Dorsolateral prefrontal cortex (tissue), 120 donors: ENCODE measurements at regions of chr20 and their contacts with region 1.

Region 1: DNA sequence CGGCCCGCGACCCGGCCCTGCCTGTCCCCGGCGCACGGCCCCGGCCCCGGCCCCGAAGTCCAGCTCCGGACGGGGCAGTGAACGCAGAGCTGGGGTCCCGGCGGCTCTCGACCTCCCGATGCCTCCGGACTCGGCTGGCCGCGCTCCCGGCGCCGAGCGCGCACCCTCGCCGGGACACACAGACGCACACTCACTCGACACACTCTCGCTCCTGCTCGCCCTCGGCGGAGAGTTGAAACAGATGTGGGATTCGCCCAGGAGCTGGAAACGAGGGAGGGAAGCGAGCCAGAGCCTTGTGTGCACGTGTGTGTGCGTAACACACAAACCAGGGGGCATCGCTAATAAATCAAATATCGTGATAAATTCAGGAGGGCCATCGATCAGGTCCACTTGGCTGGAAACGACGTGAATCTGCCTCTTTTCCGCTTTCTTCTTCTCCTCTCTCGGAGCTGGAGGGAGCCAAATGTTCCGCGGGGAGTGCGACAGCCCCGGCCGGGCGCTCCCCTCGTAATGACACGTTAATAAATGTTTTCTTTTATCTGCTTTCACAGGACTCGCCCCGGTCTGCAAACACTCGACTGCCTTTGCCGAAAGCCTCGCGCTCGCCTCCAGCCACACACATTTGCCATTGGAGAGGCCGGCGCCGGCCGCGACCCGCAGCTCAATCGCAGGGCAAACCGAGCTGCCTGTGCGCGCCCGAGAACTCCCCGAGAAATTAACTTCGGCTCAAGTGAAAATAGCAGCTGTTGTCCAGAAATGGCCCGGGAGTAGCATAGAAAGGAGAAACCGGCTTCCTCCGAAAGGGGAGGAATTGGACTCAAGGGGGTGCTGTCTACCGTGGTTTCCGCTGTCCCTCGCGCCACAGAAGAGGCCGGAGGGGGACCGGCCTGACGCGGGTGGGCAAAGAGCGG is 828 bp upstream of the SULF2 start:
- DNase-seq: peak; percentile 27 to 79 (median 62)
- H3K4me3 ChIP-seq: peak overlapping the region; percentile 36 to 73 (median 56)
- H3K27ac ChIP-seq: peak overlapping the region in 46 of 59 donors; percentile 4 to 81 (median 59)
- H3K27me3 ChIP-seq: peaks cover 0 to 37% (median 11%) of the 10 kb centered on the region in 45 donors
- CTCF ChIP-seq: peak; percentile 48 to 87 (median 72)

Region 2: DNA sequence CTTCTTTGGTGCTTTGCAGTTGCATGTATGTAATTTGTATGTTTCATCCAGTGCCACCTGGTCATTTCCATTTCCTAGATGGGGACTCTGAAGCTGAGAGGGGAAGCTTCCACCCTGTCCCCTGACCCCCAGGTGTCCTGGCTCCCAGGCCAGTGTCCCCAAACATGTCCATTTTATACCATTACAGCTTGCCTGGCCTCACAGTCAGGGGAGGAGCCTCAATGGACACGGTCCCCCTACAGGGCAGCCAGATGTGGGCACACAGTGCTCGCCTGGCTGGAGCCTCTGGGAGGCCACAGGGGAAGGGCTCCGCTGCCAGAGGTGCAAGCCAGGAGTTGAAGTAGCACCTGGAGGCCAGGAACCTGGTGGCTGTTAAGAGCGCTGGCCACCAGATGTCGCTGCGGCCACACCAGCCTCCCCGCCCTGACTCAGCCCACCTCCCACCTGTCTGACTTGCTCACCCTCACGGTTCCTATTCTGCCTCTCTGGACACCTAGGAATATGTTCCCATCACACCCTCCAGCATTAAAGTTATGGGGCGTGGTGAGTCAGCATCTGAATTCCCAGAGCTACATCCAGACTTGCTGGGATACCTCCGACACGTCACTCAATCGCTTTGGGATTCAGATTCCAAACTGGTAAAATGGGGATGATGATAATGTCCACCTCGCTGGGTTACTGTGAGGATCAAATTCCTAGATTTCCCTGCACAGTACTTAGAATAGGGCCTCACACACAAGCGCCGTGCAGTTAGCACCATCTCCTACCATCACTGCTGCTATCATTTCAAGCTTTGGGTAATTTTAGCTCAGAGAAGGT is 108.3 kb before region 1 on chr20:
- intact Hi-C with region 1: loop called in 1 of 2 experiments (anchors 10 kb)
- DNase-seq: peak in 4 of 10 donors; percentile 25 to 65 (median 44)
- H3K4me3 ChIP-seq: no peak overlapping the region
- H3K27ac ChIP-seq: no peak overlapping the region
- H3K27me3 ChIP-seq: no peaks in the 10 kb centered on the region
- CTCF ChIP-seq: peak; percentile 40 to 85 (median 70)

Region 3: GRCh38 chr20:47725248-47725973 is 60.7 kb before region 1 on chr20:
- intact Hi-C with region 1: loop called (anchors 5 kb)
- DNase-seq: peak; percentile 15 to 74 (median 66)
- H3K4me3 ChIP-seq: no peak overlapping the region
- H3K27ac ChIP-seq: no peak overlapping the region
- H3K27me3 ChIP-seq: no peaks in the 10 kb centered on the region
- CTCF ChIP-seq: peak; percentile 81 to 97 (median 92)